ENCODE measurements at regions of chr2 and their contacts with region 1.

Region 1: GRCh38 chr2:10832203-10832936 is 19.8 kb upstream of the PDIA6 start:
- DNase-seq: peak; percentile 77
- ATAC-seq: peak; percentile 94
- H3K4me3 ChIP-seq: no peak overlapping the region
- H3K27ac ChIP-seq: no peak overlapping the region
- H3K4me1 ChIP-seq: no peaks in the 10 kb centered on the region
- H3K27me3 ChIP-seq: peaks cover 34% of the 10 kb centered on the region
- CTCF ChIP-seq: peak; percentile 97
- POLR2A ChIP-seq: no peak
- RAD21 ChIP-seq: peak; percentile 98

Region 2: GRCh38 chr2:10900216-10901109 is 68.1 kb after region 1 on chr2:
- CTCF ChIA-PET with region 1: interaction called, 5 read pairs
- POLR2A ChIA-PET with region 1: no interaction called
- dilution Hi-C with region 1: no loop called
- in situ Hi-C with region 1: no loop called
- intact Hi-C with region 1: loop called (anchors 2 kb)
- DNase-seq: peak; percentile 10
- ATAC-seq: no peak
- H3K4me3 ChIP-seq: no peak overlapping the region
- H3K27ac ChIP-seq: no peak overlapping the region
- H3K4me1 ChIP-seq: peaks cover 2% of the 10 kb centered on the region; the same call in 1 of the 2 replicates
- H3K27me3 ChIP-seq: no peaks in the 10 kb centered on the region; the same call in none of the 2 replicates
- CTCF ChIP-seq: peak; percentile 21; the same call in 1 of the 2 replicates
- POLR2A ChIP-seq: no peak
- RAD21 ChIP-seq: peak; percentile 30

Region 3: GRCh38 chr2:10911261-10912075 is 79.1 kb after region 1 on chr2 and contains the start of gene KCNF1:
- CTCF ChIA-PET with region 1: interaction called, 3 read pairs
- POLR2A ChIA-PET with region 1: no interaction called
- dilution Hi-C with region 1: no loop called
- in situ Hi-C with region 1: no loop called
- intact Hi-C with region 1: loop called (anchors 5 kb)
- DNase-seq: peak; percentile 65
- ATAC-seq: peak; percentile 84
- H3K4me3 ChIP-seq: peak within 1 kb of the TSS; percentile 46
- H3K27ac ChIP-seq: no peak within 1 kb of the TSS; the same call in 1 of the 2 replicates
- H3K4me1 ChIP-seq: no peaks in the 10 kb centered on the region
- H3K27me3 ChIP-seq: no peaks in the 10 kb centered on the region
- CTCF ChIP-seq: peak; percentile 46
- POLR2A ChIP-seq: no peak
- RAD21 ChIP-seq: peak; percentile 49
- total RNA-seq, gene KCNF1: 0.54 and 0.56 TPM in 2 replicates

Region 4: DNA sequence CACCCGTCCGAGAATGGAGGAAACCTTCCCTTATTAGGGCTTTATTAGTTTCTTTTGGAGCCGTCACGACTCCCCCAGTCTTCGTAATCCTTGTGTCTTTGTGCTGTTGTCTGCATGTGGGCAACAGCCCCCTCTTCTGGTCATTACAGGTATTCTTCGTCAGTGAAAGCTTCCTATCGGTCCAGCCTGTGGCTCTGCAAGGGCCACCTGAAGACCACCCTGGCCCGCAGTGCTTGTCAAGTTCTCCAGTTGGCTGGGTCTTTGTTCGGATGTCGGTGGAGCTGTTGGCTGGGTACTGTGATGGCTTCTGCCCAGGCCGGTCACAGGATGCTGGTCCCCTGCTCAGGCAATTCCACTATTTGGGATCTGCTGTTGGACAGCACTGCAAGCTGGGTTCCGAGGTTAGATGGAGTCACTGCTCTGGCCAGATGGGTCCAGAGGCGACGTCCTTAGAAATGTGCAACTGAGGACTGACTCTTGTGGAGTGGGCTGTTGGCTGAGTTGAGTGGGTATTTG is 614.4 kb after region 1 on chr2:
- CTCF ChIA-PET with region 1: no interaction called
- POLR2A ChIA-PET with region 1: no interaction called
- dilution Hi-C with region 1: no loop called
- in situ Hi-C with region 1: loop called (anchors 10 kb)
- intact Hi-C with region 1: loop called (anchors 10 kb)
- DNase-seq: peak; percentile 67
- ATAC-seq: peak; percentile 92
- H3K4me3 ChIP-seq: no peak overlapping the region
- H3K27ac ChIP-seq: no peak overlapping the region
- H3K4me1 ChIP-seq: no peaks in the 10 kb centered on the region
- H3K27me3 ChIP-seq: no peaks in the 10 kb centered on the region
- CTCF ChIP-seq: peak; percentile 76
- POLR2A ChIP-seq: no peak
- RAD21 ChIP-seq: peak; percentile 86

Measured in IMR-90 (cell line).